ENCODE measurements at regions of chr5 and their contacts with region 1.

Region 1: DNA sequence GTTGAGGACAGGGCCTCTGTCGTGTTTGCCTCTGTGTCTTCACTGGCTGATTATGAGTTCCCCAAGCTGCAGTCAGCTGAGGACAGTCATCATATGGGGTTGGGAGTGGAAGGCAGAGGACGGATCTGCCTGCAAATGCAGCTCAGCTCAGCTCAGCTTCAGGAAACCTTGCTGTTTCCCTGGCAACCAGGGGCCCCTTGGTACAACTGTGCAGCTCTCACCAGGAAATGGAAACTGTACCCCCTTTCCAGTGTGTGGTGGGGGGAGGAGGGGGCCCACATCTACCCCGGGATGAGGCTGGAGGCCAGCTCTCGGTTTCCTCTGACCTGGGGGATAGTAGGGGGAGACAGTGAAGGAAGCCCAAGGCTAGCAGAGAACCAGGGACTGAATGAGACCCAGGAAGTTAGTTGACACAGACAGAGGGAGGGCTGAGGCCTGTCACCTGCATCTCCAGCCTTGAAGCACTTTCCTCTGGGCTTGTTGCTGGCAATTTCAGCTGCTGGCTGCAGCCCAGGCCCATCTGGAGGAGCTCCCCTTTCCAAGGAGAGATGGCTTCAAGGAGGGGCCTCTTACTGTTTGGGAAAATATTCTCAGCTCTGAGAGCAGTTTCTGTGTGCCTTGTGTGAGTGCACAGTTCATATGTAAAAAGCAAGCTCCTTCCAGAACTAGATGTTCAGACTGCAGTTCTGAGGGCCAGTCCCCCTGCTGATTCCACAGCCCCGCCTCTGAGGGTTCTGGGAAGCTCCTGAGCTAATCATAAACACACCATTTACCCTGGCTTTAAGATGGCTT is 6.9 kb downstream of the ANXA6 start:
- DNase-seq: no peak
- H3K4me3 ChIP-seq: no peak overlapping the region
- H3K27me3 ChIP-seq: no peaks in the 10 kb centered on the region
- CTCF ChIP-seq: no peak

Region 2: DNA sequence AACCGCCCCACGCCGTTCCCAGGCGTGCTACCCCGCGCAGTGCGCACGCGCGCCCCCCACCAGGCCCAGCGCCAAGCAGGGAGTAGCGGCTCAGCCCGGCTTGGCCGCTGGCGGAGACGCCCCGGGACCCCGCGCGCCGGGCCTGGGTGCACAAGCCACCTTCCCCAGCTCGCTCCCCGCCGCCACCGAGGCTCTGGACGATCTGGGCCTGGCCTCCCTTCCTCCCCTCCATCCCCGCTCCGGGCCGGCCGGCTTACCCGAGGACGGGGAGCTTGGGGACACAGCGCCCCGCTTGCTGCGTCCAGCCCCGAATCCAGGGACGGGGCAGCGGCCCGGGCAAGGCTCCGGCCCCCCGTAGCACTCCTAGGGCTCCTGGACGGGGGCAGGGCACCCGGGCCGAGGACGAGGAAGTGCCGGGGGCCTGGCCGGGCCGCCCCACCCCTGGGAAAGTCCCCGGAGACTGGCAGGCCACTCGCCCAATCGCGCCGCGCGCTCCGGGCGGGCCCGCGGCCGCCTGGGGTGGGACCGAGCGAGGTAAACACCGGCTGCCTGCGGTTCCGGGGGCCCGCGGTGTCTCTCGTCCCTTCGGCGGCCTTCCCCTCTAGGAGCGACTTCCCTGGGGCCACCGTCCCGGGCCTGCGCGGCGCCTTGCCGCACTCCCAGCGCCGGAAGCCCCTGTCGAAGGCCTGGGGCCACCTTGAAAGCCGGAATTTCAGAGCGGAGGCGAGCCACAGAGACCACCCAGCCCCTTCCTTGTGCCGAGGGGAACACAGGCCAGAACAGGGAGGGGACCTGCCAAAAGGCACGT is 69.8 kb before region 1 on chr5 and contains the start of gene TNIP1:
- CTCF ChIA-PET with region 1: no interaction called
- POLR2A ChIA-PET with region 1: interaction called, 15 read pairs
- DNase-seq: no peak
- H3K4me3 ChIP-seq: peak within 1 kb of the TSS; percentile 92
- H3K27me3 ChIP-seq: no peaks in the 10 kb centered on the region
- CTCF ChIP-seq: no peak
- polyA plus RNA-seq, gene TNIP1: 54.5 and 80.8 TPM in 2 replicates

Region 3: GRCh38 chr5:151104795-151105194 is 45.9 kb before region 1 on chr5:
- CTCF ChIA-PET with region 1: interaction called, 3 read pairs
- POLR2A ChIA-PET with region 1: interaction called, 11 read pairs
- DNase-seq: peak; percentile 80
- H3K4me3 ChIP-seq: no peak overlapping the region
- H3K27me3 ChIP-seq: no peaks in the 10 kb centered on the region
- CTCF ChIP-seq: no peak

Region 4: GRCh38 chr5:151126199-151126645 is 24.4 kb before region 1 on chr5:
- CTCF ChIA-PET with region 1: interaction called, 25 read pairs
- POLR2A ChIA-PET with region 1: interaction called, 10 read pairs
- DNase-seq: no peak
- H3K4me3 ChIP-seq: no peak overlapping the region
- H3K27me3 ChIP-seq: no peaks in the 10 kb centered on the region
- CTCF ChIP-seq: peak; percentile 85

Region 5: DNA sequence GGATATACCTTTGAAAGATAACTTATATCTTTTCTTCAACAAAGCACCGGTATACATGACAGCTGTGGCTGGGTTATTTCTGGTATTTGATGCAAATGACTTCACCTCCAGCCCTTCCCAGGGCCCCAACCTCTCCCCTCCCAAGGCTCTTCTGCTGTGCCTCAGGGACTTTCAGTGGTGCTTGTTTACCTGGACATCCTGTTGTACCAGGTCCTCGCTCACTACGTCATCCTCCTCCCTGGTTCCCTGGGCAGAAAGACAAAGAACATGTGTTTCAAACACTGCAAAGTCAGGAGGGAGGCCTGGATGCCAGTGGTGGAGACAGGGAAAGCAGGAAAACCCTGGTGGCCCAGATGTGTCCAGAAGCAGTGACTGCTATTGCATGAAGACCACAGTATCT is 16.4 kb before region 1 on chr5:
- CTCF ChIA-PET with region 1: interaction called, 3 read pairs
- POLR2A ChIA-PET with region 1: interaction called, 10 read pairs
- DNase-seq: no peak
- H3K4me3 ChIP-seq: no peak overlapping the region
- H3K27me3 ChIP-seq: no peaks in the 10 kb centered on the region
- CTCF ChIP-seq: no peak